ENCODE measurements at regions of chr9 and their contacts with region 1.

Region 1: DNA sequence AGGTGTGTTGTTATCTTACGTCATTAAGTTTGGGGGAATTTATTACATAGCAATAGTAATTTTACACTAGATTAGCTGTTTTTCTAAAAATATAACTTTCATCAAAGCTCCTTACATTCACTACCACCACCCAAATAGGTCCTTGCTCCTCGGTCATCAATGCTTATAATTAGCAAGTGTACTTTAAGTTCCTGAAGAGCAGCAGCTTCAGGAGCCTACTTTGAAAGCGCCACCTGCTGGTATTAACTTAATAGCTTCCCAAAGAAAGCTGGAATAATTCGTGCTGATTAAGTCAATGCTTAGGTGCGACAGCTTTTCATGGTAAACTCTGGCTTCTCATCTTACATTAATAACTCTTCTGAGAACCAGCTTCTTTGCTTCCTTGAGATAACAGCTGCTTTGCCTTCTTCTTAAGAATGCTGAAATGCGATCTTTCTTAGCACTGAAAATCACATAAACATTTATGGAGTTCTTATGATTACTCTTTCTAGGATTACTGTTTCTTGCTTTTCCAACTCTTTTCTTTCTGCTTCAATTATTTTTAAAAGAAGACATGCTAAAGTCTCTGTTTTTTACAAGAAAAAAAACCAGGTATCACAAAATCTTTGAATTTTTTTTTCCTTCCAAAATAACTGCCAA is 10.0 kb upstream of the C5 start:
- DNase-seq: no peak
- ATAC-seq: peak; percentile 44

Region 2: DNA sequence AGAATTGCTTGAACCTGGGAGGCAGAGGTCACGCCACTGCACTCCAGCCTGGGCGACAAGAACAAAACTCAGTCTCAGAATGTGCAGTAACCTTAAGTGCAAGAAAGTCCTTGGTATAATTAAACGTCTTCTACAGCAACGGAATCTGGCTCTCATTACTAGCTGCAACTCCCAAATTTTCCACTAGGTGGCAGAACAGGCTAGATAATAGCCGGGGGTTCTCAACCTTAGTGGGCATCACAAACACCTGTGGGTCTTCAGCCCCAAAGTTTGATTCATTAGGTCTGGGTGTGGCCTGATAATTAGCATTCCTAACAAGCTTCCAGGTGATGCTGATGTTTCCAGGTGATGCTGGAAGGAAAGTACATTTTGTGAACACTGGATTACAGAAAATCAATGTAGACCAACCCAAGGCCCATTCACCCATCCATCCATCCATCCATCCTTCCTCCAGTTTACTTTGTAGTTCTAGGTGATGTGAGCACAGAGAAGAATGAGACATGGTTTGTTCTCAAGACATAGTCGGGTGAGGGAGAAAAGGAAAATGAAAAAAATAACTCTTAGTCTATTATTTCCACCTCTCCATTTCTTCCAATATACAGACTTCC is 304.2 kb before region 1 on chr9:
- intact Hi-C with region 1: loop called (anchors 5 kb)
- DNase-seq: no peak
- ATAC-seq: peak; percentile 66

Region 3: GRCh38 chr9:120982836-120983235 is 77.3 kb before region 1 on chr9:
- intact Hi-C with region 1: loop called (anchors 5 kb)
- DNase-seq: no peak
- ATAC-seq: no peak

Region 4: GRCh38 chr9:121670431-121670830 is 610.3 kb after region 1 on chr9:
- intact Hi-C with region 1: no loop called
- DNase-seq: no peak
- ATAC-seq: peak; percentile 47